ENCODE measurements at regions of chr7 and their contacts with region 1.

Region 1: DNA sequence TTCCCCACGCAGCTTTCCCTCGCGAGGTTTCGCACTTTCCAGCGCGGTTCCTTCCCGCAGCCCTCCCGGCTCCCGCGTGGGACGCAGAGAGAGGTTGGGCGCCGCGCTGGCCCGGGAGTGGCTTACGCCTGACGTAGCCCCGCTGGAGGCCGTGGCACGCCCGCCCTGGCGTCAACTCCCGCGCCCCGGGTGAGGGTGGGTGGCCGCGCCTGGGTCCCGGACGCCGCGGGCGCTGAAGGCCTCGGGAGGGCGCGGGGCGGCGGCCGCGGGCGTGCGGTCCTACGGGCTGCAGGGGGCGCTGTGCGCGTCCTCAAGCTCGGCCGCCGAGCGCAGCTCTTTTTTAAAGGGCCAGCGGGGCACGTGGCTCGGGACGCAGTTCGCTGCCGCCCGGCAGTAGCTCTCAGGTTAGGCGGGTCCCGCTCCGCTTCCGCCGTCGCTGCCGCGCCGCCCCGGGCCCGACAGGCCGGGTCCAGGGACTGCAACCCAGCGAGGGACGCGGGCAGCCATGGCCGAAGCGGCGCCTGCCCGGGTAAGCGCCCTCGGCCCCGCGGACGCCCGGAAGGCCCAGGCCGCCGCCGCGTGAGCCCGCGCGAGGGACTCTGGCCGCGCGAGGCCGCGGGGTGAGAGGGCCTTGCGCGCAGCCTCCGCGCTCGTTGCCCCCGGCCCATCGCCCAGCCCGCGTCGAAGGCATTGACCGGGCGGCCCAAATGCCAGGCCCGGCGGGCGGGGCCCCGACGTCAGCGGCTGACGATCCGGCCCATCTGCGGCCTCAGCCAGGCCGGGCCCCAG is at the start of gene ZNF783:
- DNase-seq: peak; percentile 78 to 90 (median 84)
- ATAC-seq: peak; percentile 92 to 94
- H3K4me3 Mint-ChIP-seq: peak within 1 kb of the TSS; percentile 82 to 92 (median 86)
- H3K27ac Mint-ChIP-seq: peak within 1 kb of the TSS; percentile 83 to 95 (median 92)
- H3K4me1 Mint-ChIP-seq: peaks cover 21 to 42% (median 34%) of the 10 kb centered on the region in 4 donors
- H3K27me3 Mint-ChIP-seq: no peaks in the 10 kb centered on the region
- polyA plus RNA-seq, gene ZNF783: 3.6 to 9.0 (median 6.3) TPM

Region 2: GRCh38 chr7:149284850-149285626 is 23.0 kb after region 1 on chr7:
- POLR2A ChIA-PET with region 1: interaction called, 75 read pairs
- DNase-seq: peak; percentile 94 to 99 (median 98)
- ATAC-seq: peak; percentile 93 to 94
- H3K4me3 Mint-ChIP-seq: peak overlapping the region; percentile 87 to 95 (median 92)
- H3K27ac Mint-ChIP-seq: peak overlapping the region; percentile 82 to 95 (median 92)
- H3K4me1 Mint-ChIP-seq: peaks cover 26 to 49% (median 43%) of the 10 kb centered on the region in 4 donors
- H3K27me3 Mint-ChIP-seq: no peaks in the 10 kb centered on the region

Measured in naive thymus-derived CD8-positive, alpha-beta T cell (primary cell).